PC-9 (cell line): ENCODE measurements at regions of chr6 and their contacts with region 1.

Region 1: DNA sequence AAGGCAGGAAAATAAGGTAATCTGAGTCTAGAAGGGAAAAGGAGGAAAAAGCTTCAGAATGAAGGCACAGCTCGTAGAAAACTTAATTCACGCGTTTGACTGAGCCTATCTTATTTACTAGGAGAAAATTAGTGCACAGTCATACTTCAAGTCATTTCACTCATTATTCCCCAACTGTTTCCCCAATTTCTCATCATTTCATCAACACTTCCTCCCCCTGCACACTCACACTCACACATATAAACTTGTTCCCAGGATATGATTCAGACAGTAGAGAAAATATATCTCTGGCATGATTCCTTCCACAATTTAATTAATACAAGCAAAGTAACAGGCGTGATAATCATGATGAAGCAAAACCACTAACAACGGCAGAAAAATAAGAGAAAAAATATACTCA is 94.5 kb upstream of the F13A1 start:
- DNase-seq: no peak
- H3K4me3 ChIP-seq: no peak overlapping the region
- H3K27ac ChIP-seq: no peak overlapping the region
- H3K4me1 ChIP-seq: no peaks in the 10 kb centered on the region
- H3K27me3 ChIP-seq: 0 out of 2 replicates have a peak, but pooled peaks cover 2% of the 10 kb centered on the region
- CTCF ChIP-seq: no peak

Region 2: DNA sequence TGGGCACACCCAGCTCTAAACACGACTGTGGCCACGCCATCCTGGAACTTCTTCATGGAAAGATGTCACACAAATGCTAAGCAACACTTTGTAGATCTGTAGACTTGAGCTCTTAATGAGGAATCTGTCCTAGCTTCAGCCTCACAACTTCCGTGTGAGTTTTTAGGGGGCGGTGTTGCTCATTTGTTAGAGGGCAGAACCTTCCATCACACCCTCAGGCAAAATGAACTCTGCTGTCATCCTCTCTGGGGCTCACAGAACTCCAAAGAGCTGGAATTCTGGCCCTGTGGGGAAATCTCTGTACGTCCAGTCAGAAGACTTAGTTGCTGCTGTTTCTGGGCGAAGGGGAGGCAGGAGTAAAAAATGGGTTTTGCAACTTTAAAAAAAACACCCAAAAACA is 458.0 kb before region 1 on chr6:
- CTCF ChIA-PET with region 1: no interaction called
- POLR2A ChIA-PET with region 1: no interaction called
- intact Hi-C with region 1: no loop called
- DNase-seq: no peak
- H3K4me3 ChIP-seq: no peak overlapping the region
- H3K27ac ChIP-seq: no peak overlapping the region
- H3K4me1 ChIP-seq: no peaks in the 10 kb centered on the region
- H3K27me3 ChIP-seq: peaks cover 30% of the 10 kb centered on the region
- CTCF ChIP-seq: no peak

Region 3: DNA sequence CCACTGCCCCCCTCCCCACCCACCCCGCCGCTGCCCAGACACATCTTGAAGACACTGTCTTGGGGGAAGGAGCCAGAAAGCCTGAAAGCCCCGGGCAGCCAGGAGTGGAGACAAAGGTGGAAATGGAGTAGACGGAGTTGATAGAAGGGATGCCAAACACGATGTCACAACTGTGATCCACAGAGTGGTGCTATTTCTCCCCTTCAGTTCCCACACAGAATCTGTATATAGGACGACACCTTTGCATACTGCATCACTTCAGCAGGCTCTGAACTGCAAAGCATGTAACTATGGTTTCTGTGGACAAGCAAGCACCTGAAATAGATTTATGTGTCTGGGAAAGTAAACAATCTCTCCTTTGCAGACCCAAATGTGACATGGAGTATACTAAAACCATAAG is 38.1 kb before region 1 on chr6:
- CTCF ChIA-PET with region 1: interaction called, 13 read pairs
- POLR2A ChIA-PET with region 1: no interaction called
- intact Hi-C with region 1: no loop called
- DNase-seq: no peak
- H3K4me3 ChIP-seq: no peak overlapping the region
- H3K27ac ChIP-seq: no peak overlapping the region
- H3K4me1 ChIP-seq: no peaks in the 10 kb centered on the region
- H3K27me3 ChIP-seq: peaks cover 10% of the 10 kb centered on the region; the same call in 1 of the 2 replicates
- CTCF ChIP-seq: no peak